ENCODE measurements at regions of chr16 and their contacts with region 1.

Region 1: DNA sequence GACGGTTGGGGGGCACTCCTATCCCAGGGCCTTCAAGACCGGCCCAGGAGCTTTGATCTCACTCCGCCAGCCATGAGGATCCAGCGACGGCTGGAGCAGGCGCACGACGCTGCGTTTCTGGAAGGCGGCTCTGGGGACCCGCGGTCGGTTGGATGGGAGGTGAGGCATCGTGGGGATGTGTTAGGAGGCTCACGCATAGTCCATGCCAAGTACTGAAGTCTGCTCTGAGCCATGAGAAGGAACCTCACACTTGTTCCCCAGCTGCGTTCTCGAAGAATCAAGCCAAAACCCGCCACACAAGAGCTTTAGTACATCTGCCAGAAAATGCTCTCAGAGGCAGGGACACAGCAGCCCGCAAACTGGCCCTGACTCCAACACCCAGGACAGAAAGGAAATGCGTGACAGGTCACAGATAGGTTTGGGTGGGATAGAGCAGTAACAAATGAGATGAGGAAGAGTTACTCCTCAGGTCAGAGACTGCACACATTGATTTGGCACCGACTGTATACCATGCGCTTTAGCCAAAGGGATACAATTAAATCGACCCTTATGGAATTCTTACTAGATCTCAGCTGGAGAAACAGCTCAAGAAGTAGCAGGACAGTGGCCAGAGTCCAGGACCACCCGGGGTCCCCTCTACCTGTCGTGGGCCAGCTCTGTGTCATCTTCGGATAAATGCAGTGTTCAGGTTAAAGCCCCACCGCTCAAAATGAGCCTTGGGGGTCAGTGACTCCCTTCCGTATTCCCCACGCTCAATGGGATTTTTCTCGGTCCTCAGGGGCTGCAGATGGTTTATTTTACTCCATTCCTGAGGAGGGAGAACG is 6.7 kb upstream of the GSG1L start:
- DNase-seq: no peak
- ATAC-seq: peak in 2 of 8 donors; percentile 30 to 51
- H3K4me3 ChIP-seq: no peak overlapping the region
- H3K27ac ChIP-seq: no peak overlapping the region
- H3K4me1 ChIP-seq: peaks cover 0 to 16% (median 0%) of the 10 kb centered on the region in 9 donors
- H3K27me3 ChIP-seq: peaks cover 0 to 22% (median under 1%) of the 10 kb centered on the region in 7 donors
- CTCF ChIP-seq: no peak

Region 2: GRCh38 chr16:27685807-27686206 is 384.4 kb before region 1 on chr16:
- intact Hi-C with region 1: loop called in 1 of 10 experiments (anchors 10 kb)
- DNase-seq: no peak
- ATAC-seq: no peak
- H3K4me3 ChIP-seq: no peak overlapping the region
- H3K27ac ChIP-seq: no peak overlapping the region
- H3K4me1 ChIP-seq: peaks cover 0 to 11% (median 3%) of the 10 kb centered on the region in 9 donors
- H3K27me3 ChIP-seq: no peaks in the 10 kb centered on the region
- CTCF ChIP-seq: no peak

Region 3: GRCh38 chr16:27892881-27893280 is 177.3 kb before region 1 on chr16:
- intact Hi-C with region 1: loop called in 1 of 10 experiments (anchors 10 kb)
- DNase-seq: no peak
- ATAC-seq: no peak
- H3K4me3 ChIP-seq: no peak overlapping the region
- H3K27ac ChIP-seq: no peak overlapping the region
- H3K4me1 ChIP-seq: no peaks in the 10 kb centered on the region
- H3K27me3 ChIP-seq: peaks cover 0 to 68% (median 13%) of the 10 kb centered on the region in 7 donors
- CTCF ChIP-seq: no peak

Region 4: DNA sequence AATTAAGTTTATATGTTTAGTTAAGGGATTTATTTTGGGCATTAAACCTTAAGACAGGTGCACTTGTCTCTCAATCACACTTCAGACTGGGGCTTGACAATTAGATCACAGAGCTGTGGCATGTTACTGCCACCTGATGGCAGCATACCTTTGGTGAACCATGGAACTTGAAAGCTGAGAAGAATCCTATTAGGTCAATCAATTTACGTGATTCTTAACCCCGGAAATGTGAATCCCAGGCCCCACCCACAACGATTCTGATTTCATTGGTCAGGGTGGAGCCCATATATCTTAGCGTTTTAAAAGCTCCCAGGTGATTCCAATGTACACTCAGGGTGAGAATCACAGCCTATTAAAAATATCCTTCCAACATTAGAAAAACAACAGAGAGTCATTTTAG is 97.7 kb before region 1 on chr16:
- intact Hi-C with region 1: loop called in 9 of 10 experiments (anchors 2 to 10 kb)
- DNase-seq: peak in 1 of 2 donors; percentile 16
- ATAC-seq: peak in 1 of 8 donors; percentile 44
- H3K4me3 ChIP-seq: no peak overlapping the region
- H3K27ac ChIP-seq: no peak overlapping the region
- H3K4me1 ChIP-seq: peaks cover 0 to 3% (median 0%) of the 10 kb centered on the region in 9 donors
- H3K27me3 ChIP-seq: peaks cover 0 to 13% (median 0%) of the 10 kb centered on the region in 7 donors
- CTCF ChIP-seq: peak in 8 of 9 donors; percentile 5 to 59 (median 54)